A549 (cell line): ENCODE measurements at regions of chr1 and their contacts with region 1.

Region 1: DNA sequence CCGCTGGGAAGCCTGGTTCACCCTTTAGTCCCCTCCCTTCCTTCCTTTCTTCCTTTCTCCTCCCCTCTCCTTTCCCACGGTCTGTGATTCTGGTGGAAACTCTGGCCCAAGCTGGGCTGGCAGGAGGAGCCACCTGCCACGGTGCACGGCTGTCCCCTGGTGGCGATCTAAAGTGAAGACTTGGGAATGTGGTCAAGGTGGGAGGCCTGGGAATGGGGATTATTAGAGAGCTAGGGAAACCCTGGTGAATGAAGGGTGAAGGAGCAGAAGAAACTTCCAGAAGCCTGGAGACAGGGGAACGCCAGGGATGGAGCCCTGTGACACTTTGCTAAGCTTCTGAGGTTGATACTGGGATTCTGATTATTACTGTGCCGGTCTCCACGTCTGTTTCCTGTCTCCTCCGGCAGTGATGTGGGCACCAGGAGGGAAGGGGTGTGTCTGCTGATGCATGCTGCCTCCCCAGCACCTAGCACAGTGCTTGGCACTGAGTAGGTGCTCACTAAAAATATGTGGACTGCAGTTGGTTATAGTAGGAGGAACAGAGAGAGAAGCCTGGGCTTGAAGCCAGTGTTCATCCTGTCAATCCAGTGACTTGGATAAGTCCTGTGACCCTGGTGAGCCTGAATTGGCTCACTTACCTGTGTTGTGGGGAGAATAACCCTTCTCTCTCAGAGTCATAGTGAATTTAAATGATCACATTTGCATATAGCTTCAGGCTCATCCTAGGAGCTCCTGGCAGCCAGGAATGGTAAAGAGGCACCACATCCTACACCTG is 71.2 kb upstream of the NBPF3 start:
- DNase-seq: peak; percentile 37 to 78
- ATAC-seq: peak; percentile 96 to 97
- H3K4me3 ChIP-seq: no peak overlapping the region
- H3K27ac ChIP-seq: peak overlapping the region; percentile 32 to 65; a peak in 4 of 6 replicates
- H3K4me1 ChIP-seq: peaks cover 4% of the 10 kb centered on the region; the same call in 1 of the 3 replicates
- CTCF ChIP-seq: peak; percentile 94
- EP300 ChIP-seq: no peak
- POLR2A ChIP-seq: no peak
- RAD21 ChIP-seq: peak; percentile 99 to 100

Region 2: DNA sequence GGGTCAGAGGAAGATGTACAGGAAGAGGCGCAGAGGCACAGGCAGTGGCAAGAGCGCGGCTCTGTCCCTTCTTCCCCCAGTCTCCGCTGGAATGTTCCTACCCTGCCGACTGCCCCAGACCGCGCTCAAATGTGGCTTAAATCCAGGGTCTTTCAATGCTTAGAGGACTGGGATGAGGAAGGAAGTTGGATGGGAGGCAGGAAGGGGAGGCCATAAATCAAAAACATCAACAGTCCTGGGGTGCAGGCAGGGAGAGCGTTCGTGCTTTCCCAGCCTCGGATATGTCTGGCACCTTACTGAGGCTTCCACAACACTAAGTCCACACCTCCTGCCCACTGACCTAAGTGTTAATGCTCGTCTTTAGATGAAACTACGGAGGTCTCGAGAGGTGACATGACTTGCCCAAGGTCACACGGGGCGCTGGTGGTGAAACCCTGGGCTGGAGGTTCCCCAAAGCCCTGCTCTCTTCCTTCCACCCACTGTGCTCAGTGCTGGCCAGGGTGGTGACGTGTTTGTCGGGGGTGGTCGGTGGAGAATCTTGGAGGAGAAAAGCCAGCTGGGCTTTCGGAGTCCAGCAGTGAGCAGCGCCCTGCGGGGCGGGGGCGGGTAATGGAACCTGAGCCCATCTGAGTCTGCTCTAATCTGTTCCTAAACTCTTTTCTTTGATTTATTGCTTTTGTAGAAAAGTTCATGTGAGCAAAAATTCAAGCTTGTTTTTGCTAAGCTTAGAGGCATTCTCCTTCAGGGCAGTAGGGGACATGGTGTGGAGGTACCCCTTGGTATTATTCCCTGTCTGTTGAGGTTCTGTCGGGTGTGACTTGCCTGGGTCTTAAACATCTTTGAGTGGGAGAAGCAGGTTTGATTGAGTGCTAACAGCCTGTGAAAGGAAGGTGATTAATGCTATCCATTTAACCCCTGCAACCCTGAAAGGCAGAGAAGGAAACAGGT is 779.1 kb before region 1 on chr1:
- CTCF ChIA-PET with region 1: no interaction called
- POLR2A ChIA-PET with region 1: no interaction called
- DNase-seq: no peak
- ATAC-seq: peak; percentile 35 to 53; a peak in 3 of 6 replicates
- H3K4me3 ChIP-seq: peak overlapping the region; percentile 50
- H3K27ac ChIP-seq: peak overlapping the region; percentile 84 to 92
- H3K4me1 ChIP-seq: peaks cover 47% of the 10 kb centered on the region
- CTCF ChIP-seq: no peak
- EP300 ChIP-seq: no peak
- POLR2A ChIP-seq: no peak
- RAD21 ChIP-seq: no peak

Region 3: DNA sequence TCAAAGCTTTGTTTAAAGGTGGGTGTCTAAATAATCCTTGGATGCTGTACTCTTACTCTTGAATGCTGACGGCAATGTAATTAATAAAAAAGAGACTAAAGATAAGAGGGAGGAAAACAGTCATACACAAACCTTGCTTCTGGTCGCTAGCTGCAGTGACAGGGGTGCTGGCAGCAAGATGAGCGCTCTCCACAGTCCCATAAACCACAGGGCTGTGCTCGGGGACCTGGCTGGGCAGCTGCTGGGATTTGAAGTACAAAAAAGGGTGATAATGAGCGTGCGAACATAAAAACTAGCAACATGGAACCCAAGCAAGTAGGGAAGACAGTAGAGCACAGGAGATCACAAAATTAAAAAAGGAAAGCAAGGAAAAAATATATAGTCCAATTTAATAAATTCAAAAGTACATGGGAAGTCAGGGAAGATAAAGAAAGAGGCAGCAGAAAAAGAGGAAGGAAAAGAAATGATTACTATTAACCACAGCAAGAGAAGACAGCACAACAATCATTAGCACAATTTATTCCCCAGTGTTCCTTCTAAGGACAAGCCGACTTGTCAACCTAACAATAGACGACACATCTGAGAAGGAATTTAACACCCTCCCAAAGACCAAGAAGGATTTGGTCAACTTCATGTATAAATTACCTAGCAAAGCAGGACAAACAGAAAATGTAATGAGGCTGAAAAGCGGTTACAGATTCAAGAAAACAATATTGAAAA is 418.7 kb before region 1 on chr1:
- CTCF ChIA-PET with region 1: no interaction called
- POLR2A ChIA-PET with region 1: no interaction called
- DNase-seq: no peak
- ATAC-seq: no peak
- H3K4me3 ChIP-seq: no peak overlapping the region
- H3K27ac ChIP-seq: no peak overlapping the region
- H3K4me1 ChIP-seq: peaks cover 20% of the 10 kb centered on the region
- CTCF ChIP-seq: no peak
- EP300 ChIP-seq: no peak
- POLR2A ChIP-seq: no peak
- RAD21 ChIP-seq: no peak

Region 4: GRCh38 chr1:21232044-21232443 is 136.7 kb before region 1 on chr1:
- CTCF ChIA-PET with region 1: interaction called, 115 read pairs
- POLR2A ChIA-PET with region 1: no interaction called
- DNase-seq: peak; percentile 35 to 63
- ATAC-seq: peak; percentile 84 to 88
- H3K4me3 ChIP-seq: no peak overlapping the region
- H3K27ac ChIP-seq: no peak overlapping the region
- H3K4me1 ChIP-seq: 0 out of 3 replicates have a peak, but pooled peaks cover 3% of the 10 kb centered on the region
- CTCF ChIP-seq: peak; percentile 75
- EP300 ChIP-seq: no peak
- POLR2A ChIP-seq: no peak
- RAD21 ChIP-seq: peak; percentile 80 to 85

Region 5: GRCh38 chr1:21261551-21262281 is 107.0 kb before region 1 on chr1:
- CTCF ChIA-PET with region 1: interaction called, 253 read pairs
- POLR2A ChIA-PET with region 1: no interaction called
- DNase-seq: peak; percentile 81 to 94
- ATAC-seq: peak; percentile 72 to 79
- H3K4me3 ChIP-seq: no peak overlapping the region
- H3K27ac ChIP-seq: peak overlapping the region; percentile 95
- H3K4me1 ChIP-seq: peaks cover 69% of the 10 kb centered on the region
- CTCF ChIP-seq: no peak
- EP300 ChIP-seq: peak; percentile 61 to 78; a peak in 3 of 5 replicates
- POLR2A ChIP-seq: no peak
- RAD21 ChIP-seq: no peak; a peak in 2 of 5 replicates

Region 6: DNA sequence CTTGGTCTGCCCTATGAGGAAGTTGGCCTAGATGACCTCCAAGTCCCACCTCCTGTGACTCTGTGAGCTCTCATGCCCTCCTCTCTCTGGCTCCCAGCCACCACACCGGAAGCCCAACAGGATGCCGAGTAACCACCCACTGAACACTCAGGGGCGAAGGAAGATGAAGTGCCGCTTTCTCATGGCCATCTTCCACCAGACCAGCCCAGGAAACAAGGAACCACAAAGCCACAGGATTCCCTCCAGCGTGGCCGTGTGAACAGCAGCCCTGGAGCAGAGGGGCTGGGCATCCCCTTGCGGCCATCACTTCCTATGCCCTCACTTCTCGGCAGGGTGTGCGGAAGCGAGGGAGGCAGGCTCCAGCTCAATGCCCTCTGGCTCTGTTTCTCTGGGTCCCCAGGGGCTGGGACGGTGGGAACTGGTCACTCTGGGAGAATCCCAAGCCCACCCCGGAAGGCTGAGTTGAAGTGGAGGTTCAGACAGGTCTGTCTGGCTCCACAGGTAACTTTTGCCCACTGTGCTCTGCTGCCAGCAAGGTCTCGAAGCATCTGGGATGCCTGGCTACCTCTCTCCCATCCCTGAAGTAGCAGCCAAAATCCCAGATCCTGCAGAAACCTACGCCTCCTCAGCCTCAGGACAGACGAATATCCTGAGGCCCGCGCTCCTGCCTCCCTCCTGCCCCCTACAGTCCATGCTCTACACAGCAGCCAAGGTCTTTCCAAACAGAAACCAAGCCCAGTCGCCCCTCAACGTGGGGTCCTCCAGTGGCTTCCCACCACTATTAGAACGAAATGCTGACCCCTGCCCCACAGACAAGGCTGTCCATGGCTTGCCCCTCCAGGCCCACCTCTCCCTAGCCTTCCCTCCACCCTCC is 34.3 kb before region 1 on chr1:
- CTCF ChIA-PET with region 1: interaction called, 39 read pairs
- POLR2A ChIA-PET with region 1: no interaction called
- DNase-seq: peak; percentile 41 to 65
- ATAC-seq: peak; percentile 81 to 84
- H3K4me3 ChIP-seq: 0 out of 3 replicates have a peak overlapping the region, but pooled peaks have one; percentile 9
- H3K27ac ChIP-seq: peak overlapping the region; percentile 89 to 90
- H3K4me1 ChIP-seq: peaks cover 93% of the 10 kb centered on the region
- CTCF ChIP-seq: peak; percentile 60
- EP300 ChIP-seq: no peak
- POLR2A ChIP-seq: no peak
- RAD21 ChIP-seq: peak; percentile 68

Region 7: GRCh38 chr1:21490774-21491553 is 122.3 kb after region 1 on chr1:
- CTCF ChIA-PET with region 1: interaction called, 50 read pairs
- POLR2A ChIA-PET with region 1: no interaction called
- DNase-seq: peak; percentile 55 to 67
- ATAC-seq: peak; percentile 94 to 95
- H3K4me3 ChIP-seq: no peak overlapping the region
- H3K27ac ChIP-seq: no peak overlapping the region
- H3K4me1 ChIP-seq: no peaks in the 10 kb centered on the region
- CTCF ChIP-seq: peak; percentile 41; the same call in 2 of the 3 replicates
- EP300 ChIP-seq: no peak
- POLR2A ChIP-seq: no peak
- RAD21 ChIP-seq: peak; percentile 52 to 68

Region 8: GRCh38 chr1:21594935-21595897 is 226.5 kb after region 1 on chr1:
- CTCF ChIA-PET with region 1: interaction called, 24 read pairs
- POLR2A ChIA-PET with region 1: no interaction called
- DNase-seq: peak; percentile 60 to 70
- ATAC-seq: peak in 1 of 2 experiments; percentile 77; a peak in 3 of 6 replicates
- H3K4me3 ChIP-seq: no peak overlapping the region
- H3K27ac ChIP-seq: no peak overlapping the region
- H3K4me1 ChIP-seq: 0 out of 3 replicates have a peak, but pooled peaks cover 5% of the 10 kb centered on the region
- CTCF ChIP-seq: peak; percentile 62
- EP300 ChIP-seq: no peak
- POLR2A ChIP-seq: no peak
- RAD21 ChIP-seq: peak; percentile 69 to 86